ENCODE measurements at regions of chr6 and their contacts with region 1.

Region 1: GRCh38 chr6:52577022-52577777 is at the start of gene TRAM2:
- DNase-seq: peak; percentile 95
- ATAC-seq: peak; percentile 90
- total RNA-seq, gene TRAM2: 12.6 TPM

Region 2: GRCh38 chr6:52419809-52420670 is 157.2 kb before region 1 on chr6 and contains the start of gene EFHC1:
- intact Hi-C with region 1: loop called (anchors 2 kb)
- DNase-seq: peak; percentile 99
- ATAC-seq: peak; percentile 98
- total RNA-seq, gene EFHC1: 4.8 TPM

Region 3: GRCh38 chr6:52546678-52547077 is 30.5 kb before region 1 on chr6:
- intact Hi-C with region 1: loop called (anchors 2 kb)
- DNase-seq: no peak
- ATAC-seq: no peak

Region 4: DNA sequence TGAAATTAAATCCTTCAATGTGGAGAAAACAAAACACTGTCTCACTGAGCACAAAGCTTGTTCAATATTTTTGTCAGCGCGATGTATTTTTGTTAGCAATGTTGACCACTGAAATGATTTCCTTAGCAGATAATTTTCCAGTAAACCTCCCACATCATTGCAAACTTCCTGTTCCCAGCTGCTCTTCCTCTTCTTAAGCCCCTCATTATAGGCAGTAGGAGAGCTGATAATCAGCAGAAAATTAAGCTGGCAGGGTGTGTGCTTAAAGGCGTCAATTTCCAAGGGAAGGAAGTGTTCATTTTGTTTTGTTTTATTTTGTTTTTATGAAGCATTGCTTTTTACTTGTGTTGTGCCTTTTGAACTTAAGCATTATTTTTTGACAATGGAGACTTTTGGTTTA is 64.6 kb after region 1 on chr6:
- intact Hi-C with region 1: no loop called
- DNase-seq: no peak
- ATAC-seq: peak; percentile 46

Region 5: GRCh38 chr6:52664186-52664990 is 87.2 kb after region 1 on chr6:
- intact Hi-C with region 1: loop called (anchors 5 kb)
- DNase-seq: peak; percentile 92
- ATAC-seq: peak; percentile 98

Measured in Right ventricle myocardium inferior (tissue), 1 donor.